K562 (cell line): ENCODE measurements at regions of chr11 and their contacts with region 1.

Region 1: GRCh38 chr11:61834278-61835048 is 6.4 kb downstream of the FADS2 start:
- DNase-seq: peak; percentile 93 to 98 (median 94)
- ATAC-seq: peak; percentile 97
- H3K4me3 ChIP-seq: 0 out of 2 replicates have a peak overlapping the region, but pooled peaks have one; percentile 4
- H3K27ac ChIP-seq: peak overlapping the region; percentile 100
- H3K4me1 ChIP-seq: peaks cover 51 to 62% of the 10 kb centered on the region in 2 experiments
- H3K27me3 ChIP-seq: no peaks in the 10 kb centered on the region
- CTCF ChIP-seq: no peak
- EP300 ChIP-seq: peak; percentile 95
- POLR2A ChIP-seq: peak; percentile 72
- RAD21 ChIP-seq: peak in 1 of 2 experiments; percentile 18; a peak in 2 of 4 replicates

Region 2: DNA sequence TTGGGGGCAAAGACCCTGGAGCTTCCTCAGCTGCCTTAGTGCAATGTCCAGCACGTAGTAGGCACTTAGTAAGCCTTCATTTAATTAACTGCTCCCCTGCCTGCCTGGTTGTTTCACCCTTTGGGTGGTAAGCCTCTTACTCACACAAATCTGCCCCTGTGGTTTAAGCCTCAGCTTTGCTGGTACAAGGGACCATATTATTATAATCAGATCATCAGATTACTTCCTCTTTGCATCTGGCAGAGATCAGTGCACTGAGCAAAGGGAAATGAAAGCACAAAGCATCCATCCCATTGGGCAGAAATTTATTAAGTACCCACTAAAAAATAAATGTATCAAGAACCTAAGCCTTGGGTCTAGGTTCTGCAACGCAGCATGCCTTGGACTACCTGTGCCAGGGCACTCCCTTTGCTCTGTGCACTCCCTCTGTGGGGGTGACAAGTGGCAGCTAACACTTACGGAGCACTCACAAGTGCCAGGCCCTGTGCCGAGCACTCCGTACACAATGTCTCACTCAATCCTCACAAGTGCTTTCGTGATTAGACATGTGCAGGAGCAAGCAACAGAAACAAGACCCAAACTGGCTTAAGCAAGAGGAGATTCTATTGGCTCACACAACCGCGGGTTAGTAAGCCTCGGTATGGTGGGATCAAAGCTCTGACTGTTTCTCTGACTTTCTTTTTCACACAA is 189.1 kb before region 1 on chr11:
- CTCF ChIA-PET with region 1: no interaction called
- POLR2A ChIA-PET with region 1: no interaction called
- in situ Hi-C with region 1: no loop called
- intact Hi-C with region 1: no loop called
- DNase-seq: no peak
- ATAC-seq: no peak
- H3K4me3 ChIP-seq: no peak overlapping the region
- H3K27ac ChIP-seq: no peak overlapping the region
- H3K4me1 ChIP-seq: no peaks in the 10 kb centered on the region; a peak in 1 of 5 replicates
- H3K27me3 ChIP-seq: peaks cover 33 to 37% of the 10 kb centered on the region in 2 experiments
- CTCF ChIP-seq: no peak
- EP300 ChIP-seq: no peak
- POLR2A ChIP-seq: no peak
- RAD21 ChIP-seq: no peak

Region 3: DNA sequence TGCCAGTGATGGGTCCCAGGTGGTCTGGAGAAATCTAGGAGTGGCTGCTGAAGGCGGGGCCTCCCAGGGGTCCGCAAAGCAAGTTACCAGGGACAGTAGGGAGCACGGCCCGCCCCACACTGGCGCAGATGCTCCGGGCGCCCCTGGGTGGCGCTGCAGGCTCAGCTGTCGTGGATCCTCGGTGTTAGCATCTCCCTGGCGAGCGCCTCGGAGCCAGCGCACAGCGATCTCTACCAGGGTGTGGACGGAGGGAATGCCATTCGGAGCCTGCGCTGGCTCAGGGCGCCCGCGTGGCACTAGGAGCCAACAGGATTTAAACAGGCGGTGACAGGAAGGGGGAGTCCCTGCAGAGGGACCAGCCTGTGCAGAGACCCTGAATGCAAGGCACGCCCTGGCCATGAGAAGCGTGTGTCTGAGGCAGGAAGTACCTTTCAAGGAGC is 36.7 kb after region 1 on chr11:
- CTCF ChIA-PET with region 1: no interaction called
- POLR2A ChIA-PET with region 1: no interaction called
- in situ Hi-C with region 1: no loop called
- intact Hi-C with region 1: loop called (anchors 2 kb)
- DNase-seq: peak; percentile 88 to 93 (median 90)
- ATAC-seq: peak; percentile 94
- H3K4me3 ChIP-seq: no peak overlapping the region
- H3K27ac ChIP-seq: peak overlapping the region; percentile 85
- H3K4me1 ChIP-seq: peaks cover 43 to 76% of the 10 kb centered on the region in 2 experiments
- H3K27me3 ChIP-seq: no peaks in the 10 kb centered on the region
- CTCF ChIP-seq: peak; percentile 91 to 97 (median 96)
- EP300 ChIP-seq: no peak
- POLR2A ChIP-seq: no peak
- RAD21 ChIP-seq: peak; percentile 93 to 96